Motor neuron (in vitro differentiated cells): ENCODE measurements at regions of chr2 and their contacts with region 1.

Region 1: GRCh38 chr2:26846328-26847306 is 1.3 kb upstream of the DPYSL5 start:
- ATAC-seq: peak; percentile 10 to 82 (median 22)
- H3K4me3 ChIP-seq: peak overlapping the region; percentile 62 to 92 (median 78)
- H3K27ac ChIP-seq: peak overlapping the region in 1 of 2 donors; percentile 9
- H3K4me1 ChIP-seq: peaks cover 11 to 14% of the 10 kb centered on the region in 2 donors

Region 2: GRCh38 chr2:26469092-26469710 is 377.4 kb before region 1 on chr2:
- in situ Hi-C with region 1: no loop called
- ATAC-seq: peak in 3 of 8 experiments; percentile 18 to 76 (median 43)
- H3K4me3 ChIP-seq: no peak overlapping the region
- H3K27ac ChIP-seq: no peak overlapping the region
- H3K4me1 ChIP-seq: no peaks in the 10 kb centered on the region

Region 3: GRCh38 chr2:26933431-26934334 is 87.1 kb after region 1 on chr2:
- in situ Hi-C with region 1: loop called in 5 of 9 experiments (anchors 10 to 25 kb)
- ATAC-seq: no peak
- H3K4me3 ChIP-seq: no peak overlapping the region
- H3K27ac ChIP-seq: no peak overlapping the region
- H3K4me1 ChIP-seq: no peaks in the 10 kb centered on the region

Region 4: GRCh38 chr2:26942543-26943295 is 96.1 kb after region 1 on chr2:
- in situ Hi-C with region 1: loop called in 7 of 9 experiments (anchors 10 to 25 kb)
- ATAC-seq: peak; percentile 47 to 72 (median 62)
- H3K4me3 ChIP-seq: no peak overlapping the region
- H3K27ac ChIP-seq: no peak overlapping the region
- H3K4me1 ChIP-seq: no peaks in the 10 kb centered on the region

Region 5: GRCh38 chr2:27016801-27017325 is 170.2 kb after region 1 on chr2:
- in situ Hi-C with region 1: loop called in 1 of 9 experiments (anchors 25 kb)
- ATAC-seq: peak in 5 of 8 experiments; percentile 10 to 70 (median 20)
- H3K4me3 ChIP-seq: no peak overlapping the region
- H3K27ac ChIP-seq: no peak overlapping the region
- H3K4me1 ChIP-seq: peaks cover 19 to 23% of the 10 kb centered on the region in 2 donors

Region 6: DNA sequence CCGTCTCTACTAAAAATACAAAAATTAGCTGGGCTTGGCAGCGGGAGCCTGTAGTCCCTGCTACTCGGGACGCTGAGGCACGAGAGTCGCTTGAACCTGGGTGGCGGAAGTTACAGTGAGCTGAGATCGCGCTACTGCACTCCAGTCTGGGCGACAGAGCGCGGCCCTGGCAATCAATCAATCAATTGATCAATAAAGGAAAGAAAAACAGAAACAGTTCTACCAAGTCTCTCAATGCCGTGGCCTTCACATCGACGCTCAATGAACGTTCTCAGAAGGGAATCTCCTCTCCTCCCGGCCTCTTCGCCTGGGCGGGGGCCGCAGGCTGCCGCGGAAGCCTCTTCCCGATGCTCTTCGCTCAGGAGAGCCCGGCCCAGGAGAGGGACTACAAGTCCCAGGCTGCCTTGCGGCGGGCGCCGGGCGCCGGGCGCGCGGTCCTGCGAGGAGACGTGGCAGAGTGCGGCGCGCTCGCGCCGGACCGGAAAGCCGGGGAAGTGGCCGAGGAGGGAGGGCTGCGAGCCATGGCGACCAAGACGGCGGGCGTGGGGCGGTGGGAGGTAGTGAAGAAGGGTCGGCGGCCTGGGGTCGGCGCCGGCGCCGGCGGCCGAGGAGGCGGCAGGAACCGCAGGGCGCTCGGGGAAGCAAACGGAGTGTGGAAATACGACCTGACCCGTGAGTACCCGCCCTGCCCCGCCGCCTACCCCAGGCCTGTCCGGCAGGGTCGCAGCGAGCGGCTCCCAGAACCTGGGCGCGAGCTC is 186.1 kb after region 1 on chr2 and contains the start of gene TMEM214:
- in situ Hi-C with region 1: loop called in 1 of 9 experiments (anchors 25 kb)
- ATAC-seq: peak; percentile 97 to 99 (median 98)
- H3K4me3 ChIP-seq: peak within 1 kb of the TSS; percentile 52 to 94 (median 81)
- H3K27ac ChIP-seq: peak within 1 kb of the TSS; percentile 78 to 91
- H3K4me1 ChIP-seq: peaks cover 10 to 12% of the 10 kb centered on the region in 2 donors
- total RNA-seq, gene TMEM214: 11.8 to 44.1 (median 30.1) TPM